ENCODE measurements at regions of chr5 and their contacts with region 1.

Region 1: DNA sequence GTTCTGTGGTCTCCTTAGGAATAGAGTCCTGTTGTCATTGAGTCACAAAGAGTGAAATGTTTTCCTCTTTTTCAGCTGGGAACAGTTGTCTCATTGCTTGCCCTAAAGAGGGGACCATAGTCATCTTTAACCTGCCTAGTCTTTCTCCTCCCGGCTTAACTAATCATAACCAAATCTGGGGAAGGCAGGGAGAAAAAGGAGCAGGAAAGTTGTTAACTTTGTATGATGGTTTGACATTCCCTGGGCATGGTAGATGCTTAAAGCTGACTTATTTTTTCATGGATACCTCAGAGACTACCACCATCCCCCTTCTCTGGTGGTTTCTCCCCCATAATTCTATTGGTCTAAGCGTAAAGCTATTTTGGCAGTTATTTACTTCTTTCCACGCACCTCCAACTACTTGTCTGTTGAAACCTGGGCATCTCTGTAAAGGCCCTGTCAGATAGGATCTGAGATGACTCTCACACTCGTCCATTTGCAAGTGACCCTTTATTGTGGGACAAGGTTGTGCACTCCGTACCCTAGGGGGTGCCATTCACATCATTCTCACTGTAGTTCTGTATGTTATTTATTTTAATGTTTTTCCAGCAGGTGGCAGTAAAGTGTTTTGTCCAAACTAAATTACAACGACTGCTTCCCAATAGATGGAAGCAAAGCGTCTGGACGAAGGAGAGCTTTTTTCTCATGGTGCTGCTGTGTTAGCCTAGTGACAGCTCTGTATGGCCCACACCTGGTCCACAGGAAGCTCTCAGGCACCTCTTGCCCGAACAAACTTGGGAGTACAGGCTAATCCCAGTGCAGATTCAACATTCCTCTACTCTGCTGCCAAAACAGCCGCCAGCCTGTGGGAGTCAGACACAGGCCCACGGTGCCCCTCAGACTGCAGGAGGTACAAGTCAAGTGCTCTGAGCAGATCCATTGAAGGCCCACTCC is 3.0 kb upstream of the FAM13B start:
- DNase-seq: peak; percentile 72
- H3K4me3 Mint-ChIP-seq: peak overlapping the region; percentile 9
- H3K27ac Mint-ChIP-seq: no peak overlapping the region
- H3K4me1 Mint-ChIP-seq: peaks cover 31% of the 10 kb centered on the region
- H3K27me3 Mint-ChIP-seq: no peaks in the 10 kb centered on the region

Region 2: DNA sequence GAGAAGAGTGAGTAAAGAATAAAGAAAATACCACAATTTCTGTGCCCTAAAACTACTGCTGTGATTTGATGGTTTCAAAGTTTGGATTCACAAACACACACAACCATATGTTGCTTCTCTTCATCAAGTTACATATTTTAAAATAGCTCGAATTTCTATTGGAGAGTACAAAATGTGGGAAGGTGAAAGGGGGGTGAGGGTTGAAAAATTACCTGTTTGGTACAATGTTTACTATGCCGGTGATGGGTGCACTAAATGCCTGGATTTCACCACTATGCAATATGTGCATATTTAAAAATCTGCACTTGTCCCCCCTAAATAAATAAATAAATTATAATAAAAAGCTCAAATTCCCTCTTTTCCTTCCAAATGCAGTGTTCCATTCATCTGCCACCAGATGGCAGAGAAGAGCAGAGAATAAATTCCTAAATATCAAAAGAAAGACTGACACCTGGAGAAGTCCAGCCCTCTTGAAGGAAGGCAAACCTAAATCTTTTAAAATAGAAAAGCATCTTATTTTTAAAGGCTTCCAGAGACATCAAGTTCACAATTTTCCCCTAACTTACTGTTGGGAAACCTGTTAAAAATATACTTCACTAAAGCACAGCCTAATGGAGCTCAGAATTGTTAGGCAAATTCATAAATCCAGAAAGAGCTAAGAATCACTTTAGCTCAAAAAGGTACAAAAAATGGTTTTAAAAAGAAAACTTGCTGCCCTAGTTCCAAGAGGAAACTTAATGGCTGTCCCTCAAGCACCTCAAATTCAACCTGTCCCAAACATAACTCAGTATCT is 256.9 kb before region 1 on chr5:
- CTCF ChIA-PET with region 1: interaction called, 18 read pairs
- POLR2A ChIA-PET with region 1: no interaction called
- intact Hi-C with region 1: no loop called
- DNase-seq: no peak
- H3K4me3 Mint-ChIP-seq: no peak overlapping the region
- H3K27ac Mint-ChIP-seq: no peak overlapping the region
- H3K4me1 Mint-ChIP-seq: no peaks in the 10 kb centered on the region
- H3K27me3 Mint-ChIP-seq: peaks cover 1% of the 10 kb centered on the region

Region 3: DNA sequence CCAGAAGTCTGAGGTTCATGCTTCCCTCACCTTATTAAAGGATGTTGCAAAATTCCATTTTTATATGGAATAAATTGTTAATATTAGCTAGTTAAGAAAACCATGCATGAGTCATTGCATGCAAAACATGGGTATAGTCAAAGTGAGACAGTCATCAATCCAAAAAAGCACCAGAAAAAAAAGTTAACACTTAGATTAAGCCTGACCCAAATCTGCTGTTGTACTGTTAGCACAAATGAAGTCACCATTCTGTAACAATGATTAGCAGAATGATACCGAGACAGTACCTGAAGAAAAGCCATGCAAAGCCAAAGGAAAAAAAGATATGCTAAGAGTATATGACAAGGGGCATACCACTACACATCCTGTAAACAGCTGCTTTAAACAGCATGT is 97.1 kb before region 1 on chr5:
- CTCF ChIA-PET with region 1: no interaction called
- POLR2A ChIA-PET with region 1: no interaction called
- intact Hi-C with region 1: loop called (anchors 2 kb)
- DNase-seq: no peak
- H3K4me3 Mint-ChIP-seq: no peak overlapping the region
- H3K27ac Mint-ChIP-seq: peak overlapping the region; percentile 77
- H3K4me1 Mint-ChIP-seq: peaks cover 18% of the 10 kb centered on the region
- H3K27me3 Mint-ChIP-seq: no peaks in the 10 kb centered on the region

Region 4: GRCh38 chr5:138025285-138025684 is 10.6 kb before region 1 on chr5:
- CTCF ChIA-PET with region 1: interaction called, 20 read pairs
- POLR2A ChIA-PET with region 1: no interaction called
- intact Hi-C with region 1: no loop called
- DNase-seq: no peak
- H3K4me3 Mint-ChIP-seq: no peak overlapping the region
- H3K27ac Mint-ChIP-seq: no peak overlapping the region
- H3K4me1 Mint-ChIP-seq: peaks cover 69% of the 10 kb centered on the region
- H3K27me3 Mint-ChIP-seq: no peaks in the 10 kb centered on the region

Region 5: DNA sequence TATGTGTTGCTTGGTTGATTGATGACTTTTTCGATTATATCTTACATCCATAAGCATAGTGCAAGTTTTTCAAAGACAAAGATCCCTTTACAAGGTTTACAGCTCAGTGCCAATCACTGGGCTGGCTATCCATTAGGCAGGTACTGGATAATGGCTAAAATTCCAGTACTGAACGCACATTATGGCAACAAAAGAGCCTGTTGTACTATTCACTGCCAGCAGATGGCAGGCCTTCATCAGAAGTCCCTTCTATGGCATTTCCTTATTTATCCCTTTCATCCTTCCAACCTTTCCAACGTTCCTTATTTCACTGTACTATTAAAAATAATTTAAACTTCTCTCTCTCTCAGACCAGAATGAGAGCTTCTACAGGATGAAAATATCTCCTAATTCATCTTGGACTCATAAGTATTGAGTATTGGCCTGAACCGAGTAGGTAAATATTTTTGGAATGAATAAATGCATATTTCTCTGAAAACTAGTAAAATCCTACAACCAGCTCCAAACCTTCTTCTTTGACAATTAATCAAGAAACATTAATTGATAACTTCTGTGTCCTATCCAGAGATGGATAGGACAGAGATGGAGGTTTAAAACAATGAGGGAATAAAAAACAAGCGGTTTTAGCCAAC is 41.3 kb after region 1 on chr5:
- CTCF ChIA-PET with region 1: interaction called, 49 read pairs
- POLR2A ChIA-PET with region 1: no interaction called
- intact Hi-C with region 1: no loop called
- DNase-seq: peak; percentile 67
- H3K4me3 Mint-ChIP-seq: no peak overlapping the region
- H3K27ac Mint-ChIP-seq: no peak overlapping the region
- H3K4me1 Mint-ChIP-seq: peaks cover 13% of the 10 kb centered on the region
- H3K27me3 Mint-ChIP-seq: no peaks in the 10 kb centered on the region

Region 6: GRCh38 chr5:138178516-138179276 is 142.8 kb after region 1 on chr5 and contains the starts of genes BRD8 and KIF20A:
- CTCF ChIA-PET with region 1: interaction called, 10 read pairs
- POLR2A ChIA-PET with region 1: no interaction called
- intact Hi-C with region 1: loop called (anchors 2 kb)
- DNase-seq: peak; percentile 96
- H3K4me3 Mint-ChIP-seq: no peak within 1 kb of the TSS
- H3K27ac Mint-ChIP-seq: no peak within 1 kb of the TSS
- H3K4me1 Mint-ChIP-seq: peaks cover 17% of the 10 kb centered on the region
- H3K27me3 Mint-ChIP-seq: no peaks in the 10 kb centered on the region
- total RNA-seq, gene BRD8: 62.9 to 65.8 TPM
- total RNA-seq, gene KIF20A: 55.5 to 60.3 TPM

Measured in activated CD4-positive, alpha-beta memory T cell treated with anti-CD3 and anti-CD28 coated beads for 36 hours (primary cell).